MCF 10A (cell line): ENCODE measurements at regions of chr20 and their contacts with region 1.

Region 1: DNA sequence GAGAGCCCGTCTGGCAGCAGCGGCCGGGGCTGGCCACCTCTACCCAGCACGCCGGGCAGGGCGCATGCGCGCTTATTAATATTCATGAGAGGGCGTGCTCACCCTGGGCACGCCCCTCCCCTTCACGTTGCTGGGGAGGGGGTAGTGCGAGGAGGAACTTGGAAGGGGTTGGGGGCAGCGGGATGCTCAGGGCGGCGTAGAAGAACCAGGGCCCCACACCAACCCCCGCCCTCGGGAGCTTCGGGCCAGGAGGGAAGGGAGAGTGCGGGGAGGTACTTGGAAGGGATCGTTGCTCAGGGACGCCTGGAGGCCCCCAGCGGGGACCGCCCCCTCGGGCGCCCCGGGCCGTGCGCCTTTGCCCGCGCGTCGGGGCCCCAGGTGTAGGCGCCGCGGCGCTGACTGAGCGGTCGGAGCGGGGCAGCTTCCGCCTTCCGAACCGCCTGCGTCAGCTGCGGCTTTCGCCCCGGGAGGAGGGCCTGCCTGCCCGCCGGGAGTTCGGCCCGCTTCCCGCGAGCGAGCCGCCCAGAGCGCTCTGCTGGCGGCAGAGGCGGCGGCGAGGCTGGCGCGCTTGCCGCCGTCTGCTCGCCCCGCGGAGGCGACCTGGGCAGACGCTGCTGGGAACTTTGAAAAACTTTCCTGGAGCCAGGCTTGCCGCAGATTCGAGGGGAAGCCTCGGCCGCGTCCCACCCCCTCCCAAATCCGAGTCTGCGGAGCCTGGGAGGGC is at the start of gene JAG1:
- DNase-seq: peak; percentile 95
- H3K4me3 Mint-ChIP-seq: peak within 1 kb of the TSS; percentile 98
- H3K27ac Mint-ChIP-seq: peak within 1 kb of the TSS; percentile 91
- H3K4me1 Mint-ChIP-seq: peaks cover 29% of the 10 kb centered on the region
- H3K27me3 Mint-ChIP-seq: no peaks in the 10 kb centered on the region
- CTCF ChIP-seq: no peak
- total RNA-seq, gene JAG1: 62.5 and 88.0 TPM in 2 replicates

Region 2: DNA sequence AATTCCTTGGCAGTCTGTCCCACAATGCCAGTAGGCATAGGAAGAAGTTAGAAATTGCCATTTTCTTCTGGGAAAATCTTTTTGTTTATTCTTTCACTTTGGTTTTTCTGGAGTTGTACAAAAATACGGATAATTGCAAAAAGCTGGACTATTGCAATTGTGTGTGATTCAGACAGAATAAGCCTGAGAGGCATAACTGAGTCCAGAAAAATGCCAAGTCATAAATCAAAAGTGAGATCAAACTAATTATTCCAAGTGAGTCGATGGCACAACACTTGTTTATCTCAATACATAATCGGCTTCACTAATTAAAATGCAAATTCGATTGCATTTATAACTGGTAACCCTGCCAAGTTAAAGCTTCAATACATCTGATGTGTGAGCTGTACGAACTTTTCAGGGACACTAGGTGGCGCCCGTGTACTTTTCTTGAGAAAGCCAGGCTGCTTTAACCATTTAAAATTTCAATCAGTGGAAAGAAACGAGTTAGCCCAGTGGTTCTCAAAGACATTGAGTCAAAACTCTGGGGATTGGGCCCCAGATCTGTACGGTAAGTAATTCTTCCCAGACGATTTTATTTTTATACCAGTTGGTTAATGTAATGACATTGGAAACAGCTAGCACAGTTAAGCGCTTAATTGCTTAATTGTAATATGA is 1057.2 kb before region 1 on chr20:
- CTCF ChIA-PET with region 1: no interaction called
- POLR2A ChIA-PET with region 1: interaction called, 4 read pairs
- intact Hi-C with region 1: loop called (anchors 10 kb)
- DNase-seq: peak; percentile 72
- H3K4me3 Mint-ChIP-seq: no peak overlapping the region
- H3K27ac Mint-ChIP-seq: no peak overlapping the region
- H3K4me1 Mint-ChIP-seq: no peaks in the 10 kb centered on the region
- H3K27me3 Mint-ChIP-seq: peaks cover 28% of the 10 kb centered on the region
- CTCF ChIP-seq: peak; percentile 93

Region 3: DNA sequence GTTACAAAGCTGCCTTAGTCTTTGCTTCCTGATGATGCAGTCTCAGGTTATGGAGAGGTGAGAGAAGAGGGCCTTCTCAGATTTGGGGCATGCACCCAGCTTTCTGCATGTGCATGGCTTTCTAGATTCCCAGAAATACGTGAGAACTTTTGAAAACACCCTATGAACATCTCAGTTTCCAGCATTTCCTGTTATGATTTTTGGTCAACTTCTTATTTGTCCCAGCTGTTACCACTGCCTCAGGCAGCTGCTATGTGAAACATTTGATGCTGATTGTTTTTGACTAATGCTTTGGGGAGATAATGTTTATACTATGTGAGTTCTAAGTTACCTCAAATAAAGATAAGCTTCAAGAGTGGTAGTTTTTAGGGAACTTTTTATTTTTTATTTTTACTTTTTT is 465.1 kb before region 1 on chr20:
- CTCF ChIA-PET with region 1: no interaction called
- POLR2A ChIA-PET with region 1: no interaction called
- intact Hi-C with region 1: no loop called
- DNase-seq: no peak
- H3K4me3 Mint-ChIP-seq: no peak overlapping the region
- H3K27ac Mint-ChIP-seq: no peak overlapping the region
- H3K4me1 Mint-ChIP-seq: no peaks in the 10 kb centered on the region
- H3K27me3 Mint-ChIP-seq: peaks cover 29% of the 10 kb centered on the region
- CTCF ChIP-seq: no peak

Region 4: DNA sequence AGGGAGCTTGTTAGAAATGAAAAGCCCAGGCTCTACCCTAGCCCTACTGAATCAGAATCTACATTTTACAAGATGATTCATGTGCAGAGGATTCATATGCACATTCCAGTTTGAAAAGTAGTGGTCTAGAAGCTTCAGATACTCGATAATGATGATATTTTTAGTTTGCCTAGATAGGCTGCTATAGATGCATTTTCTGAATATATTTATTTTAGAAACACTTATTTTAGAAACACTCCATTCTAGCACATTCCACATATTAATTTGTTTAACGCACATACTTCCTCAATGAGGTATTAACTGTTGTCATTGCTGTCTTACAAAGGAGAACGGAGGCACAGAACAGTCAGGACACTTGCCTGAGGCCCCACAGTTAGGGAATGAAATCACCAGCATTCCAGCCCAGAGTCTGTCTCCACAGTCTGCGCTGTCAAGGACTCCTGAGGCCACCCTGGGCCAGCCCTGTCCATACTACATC is 391.1 kb before region 1 on chr20:
- CTCF ChIA-PET with region 1: no interaction called
- POLR2A ChIA-PET with region 1: no interaction called
- intact Hi-C with region 1: no loop called
- DNase-seq: no peak
- H3K4me3 Mint-ChIP-seq: no peak overlapping the region
- H3K27ac Mint-ChIP-seq: no peak overlapping the region
- H3K4me1 Mint-ChIP-seq: peaks cover 13% of the 10 kb centered on the region
- H3K27me3 Mint-ChIP-seq: no peaks in the 10 kb centered on the region
- CTCF ChIP-seq: no peak

Region 5: DNA sequence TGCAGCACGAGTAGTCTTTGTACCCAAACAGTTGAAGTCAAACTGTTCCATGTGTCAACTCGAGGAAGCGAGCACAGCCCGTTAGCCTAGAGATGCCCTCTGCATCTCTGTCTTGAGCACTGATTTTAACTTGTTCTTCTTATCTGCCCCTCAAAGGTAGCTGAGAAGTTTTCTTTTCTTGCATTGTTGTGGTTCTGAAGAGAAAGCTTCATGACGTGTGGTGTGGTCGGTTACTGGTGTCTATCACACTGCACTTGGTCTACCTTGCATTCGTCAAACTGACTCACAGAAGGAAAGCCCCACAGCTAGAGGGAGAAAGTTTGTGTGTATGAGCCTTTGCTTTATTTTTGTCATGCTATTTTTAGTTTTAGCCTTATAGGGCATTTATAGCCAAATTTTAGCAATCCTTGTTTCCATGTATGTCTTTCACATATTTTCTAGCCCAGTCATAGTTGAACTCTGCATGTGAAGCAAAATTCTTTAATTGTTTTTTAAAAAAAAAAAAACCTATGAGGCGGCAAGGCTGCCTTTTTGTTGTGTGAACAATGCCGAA is 115.4 kb before region 1 on chr20:
- CTCF ChIA-PET with region 1: interaction called, 35 read pairs
- POLR2A ChIA-PET with region 1: interaction called, 60 read pairs
- intact Hi-C with region 1: loop called (anchors 1 kb)
- DNase-seq: peak; percentile 90
- H3K4me3 Mint-ChIP-seq: peak overlapping the region; percentile 18
- H3K27ac Mint-ChIP-seq: peak overlapping the region; percentile 68
- H3K4me1 Mint-ChIP-seq: peaks cover 26% of the 10 kb centered on the region
- H3K27me3 Mint-ChIP-seq: no peaks in the 10 kb centered on the region
- CTCF ChIP-seq: no peak

Region 6: DNA sequence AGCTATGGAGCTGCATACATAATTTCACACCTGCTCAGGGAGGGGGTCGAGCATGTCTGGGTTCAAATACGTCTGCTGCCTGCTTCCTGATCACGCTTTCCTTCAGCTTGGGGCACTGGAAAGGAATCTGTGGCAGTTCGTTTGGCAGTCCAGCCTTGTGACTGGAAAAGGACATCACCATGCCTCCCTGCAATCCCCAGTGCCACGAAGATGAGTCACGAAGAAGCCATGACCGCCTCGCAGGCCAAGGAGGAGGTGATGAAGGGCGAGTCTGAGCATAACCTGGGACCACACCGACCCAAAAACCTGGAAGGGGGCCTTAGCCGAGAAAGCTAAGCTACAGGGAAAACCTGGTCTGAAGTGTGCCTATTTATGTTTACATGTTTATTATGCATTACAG is 13.5 kb before region 1 on chr20:
- CTCF ChIA-PET with region 1: interaction called, 18 read pairs
- POLR2A ChIA-PET with region 1: interaction called, 75 read pairs
- intact Hi-C with region 1: no loop called
- DNase-seq: peak; percentile 70
- H3K4me3 Mint-ChIP-seq: peak overlapping the region; percentile 3
- H3K27ac Mint-ChIP-seq: peak overlapping the region; percentile 56
- H3K4me1 Mint-ChIP-seq: peaks cover 30% of the 10 kb centered on the region
- H3K27me3 Mint-ChIP-seq: no peaks in the 10 kb centered on the region
- CTCF ChIP-seq: no peak

Region 7: GRCh38 chr20:10857352-10858070 is 183.4 kb after region 1 on chr20:
- CTCF ChIA-PET with region 1: interaction called, 6 read pairs
- POLR2A ChIA-PET with region 1: interaction called, 29 read pairs
- intact Hi-C with region 1: no loop called
- DNase-seq: peak; percentile 93
- H3K4me3 Mint-ChIP-seq: no peak overlapping the region
- H3K27ac Mint-ChIP-seq: peak overlapping the region; percentile 46
- H3K4me1 Mint-ChIP-seq: peaks cover 49% of the 10 kb centered on the region
- H3K27me3 Mint-ChIP-seq: no peaks in the 10 kb centered on the region
- CTCF ChIP-seq: no peak

Region 8: GRCh38 chr20:11140359-11140758 is 466.2 kb after region 1 on chr20:
- CTCF ChIA-PET with region 1: interaction called, 11 read pairs
- POLR2A ChIA-PET with region 1: interaction called, 23 read pairs
- intact Hi-C with region 1: loop called (anchors 1 kb)
- DNase-seq: peak; percentile 84
- H3K4me3 Mint-ChIP-seq: no peak overlapping the region
- H3K27ac Mint-ChIP-seq: peak overlapping the region; percentile 29
- H3K4me1 Mint-ChIP-seq: peaks cover 6% of the 10 kb centered on the region
- H3K27me3 Mint-ChIP-seq: no peaks in the 10 kb centered on the region
- CTCF ChIP-seq: no peak

Region 9: GRCh38 chr20:11544029-11544678 is 870.0 kb after region 1 on chr20:
- CTCF ChIA-PET with region 1: interaction called, 17 read pairs
- POLR2A ChIA-PET with region 1: interaction called, 8 read pairs
- intact Hi-C with region 1: loop called (anchors 1 kb)
- DNase-seq: peak; percentile 75
- H3K4me3 Mint-ChIP-seq: no peak overlapping the region
- H3K27ac Mint-ChIP-seq: no peak overlapping the region
- H3K4me1 Mint-ChIP-seq: no peaks in the 10 kb centered on the region
- H3K27me3 Mint-ChIP-seq: no peaks in the 10 kb centered on the region
- CTCF ChIP-seq: peak; percentile 73